ENCODE measurements at regions of chr4 and their contacts with region 1.

Region 1: GRCh38 chr4:139030614-139031235 is 15.1 kb downstream of the NOCT start:
- DNase-seq: peak; percentile 75
- ATAC-seq: peak; percentile 72
- H3K4me3 Mint-ChIP-seq: peak overlapping the region; percentile 28; the same call in 1 of the 2 replicates
- H3K27ac Mint-ChIP-seq: peak overlapping the region; percentile 82
- H3K4me1 Mint-ChIP-seq: peaks cover 50% of the 10 kb centered on the region
- H3K27me3 Mint-ChIP-seq: no peaks in the 10 kb centered on the region
- CTCF ChIP-seq: peak; percentile 62; the same call in 1 of the 2 replicates

Region 2: DNA sequence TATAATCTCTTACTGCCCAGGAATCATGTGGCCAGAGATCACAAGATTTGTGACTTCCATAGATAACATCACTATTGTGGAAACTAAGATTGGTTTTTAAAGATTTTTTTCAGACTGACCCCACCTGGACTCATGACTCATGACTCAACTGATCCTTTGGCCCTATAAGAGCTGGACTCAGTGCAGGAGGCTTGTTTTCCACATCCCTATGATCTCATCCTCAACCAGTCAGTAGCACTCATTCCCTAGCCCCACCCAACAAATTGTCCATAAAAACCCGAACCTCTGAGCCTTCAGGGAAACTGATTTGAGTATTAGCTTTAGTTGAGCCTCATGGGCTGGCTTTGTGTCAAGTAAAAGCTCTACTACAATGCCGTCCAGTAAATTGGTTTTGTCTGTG is 23.1 kb before region 1 on chr4:
- CTCF ChIA-PET with region 1: interaction called, 10 read pairs
- POLR2A ChIA-PET with region 1: no interaction called
- DNase-seq: no peak
- ATAC-seq: no peak
- H3K4me3 Mint-ChIP-seq: no peak overlapping the region
- H3K27ac Mint-ChIP-seq: no peak overlapping the region
- H3K4me1 Mint-ChIP-seq: peaks cover 11% of the 10 kb centered on the region
- H3K27me3 Mint-ChIP-seq: no peaks in the 10 kb centered on the region
- CTCF ChIP-seq: no peak

Region 3: DNA sequence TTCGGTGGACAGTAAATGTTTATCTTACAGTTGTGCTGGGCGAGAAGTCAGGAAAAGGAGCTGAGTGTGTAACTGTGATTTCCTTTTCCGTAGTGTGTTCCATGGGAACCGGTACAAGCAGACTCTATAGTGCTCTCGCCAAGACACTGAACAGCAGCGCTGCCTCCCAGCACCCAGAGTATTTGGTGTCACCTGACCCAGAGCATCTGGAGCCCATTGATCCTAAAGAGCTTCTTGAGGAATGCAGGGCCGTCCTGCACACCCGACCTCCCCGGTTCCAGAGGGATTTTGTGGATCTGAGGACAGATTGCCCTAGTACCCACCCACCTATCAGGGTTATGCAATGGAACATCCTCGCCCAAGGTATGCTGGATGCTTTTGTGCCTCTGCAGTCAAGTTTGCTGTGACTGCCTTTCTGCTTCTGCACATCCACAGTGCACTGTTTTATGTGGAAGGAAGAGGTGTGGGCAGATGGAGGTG is 12.3 kb after region 1 on chr4:
- CTCF ChIA-PET with region 1: interaction called, 31 read pairs
- POLR2A ChIA-PET with region 1: interaction called, 4 read pairs
- DNase-seq: no peak
- ATAC-seq: peak; percentile 35; the same call in 1 of the 2 replicates
- H3K4me3 Mint-ChIP-seq: no peak overlapping the region
- H3K27ac Mint-ChIP-seq: peak overlapping the region; percentile 92
- H3K4me1 Mint-ChIP-seq: peaks cover 22% of the 10 kb centered on the region
- H3K27me3 Mint-ChIP-seq: no peaks in the 10 kb centered on the region
- CTCF ChIP-seq: no peak

Region 4: DNA sequence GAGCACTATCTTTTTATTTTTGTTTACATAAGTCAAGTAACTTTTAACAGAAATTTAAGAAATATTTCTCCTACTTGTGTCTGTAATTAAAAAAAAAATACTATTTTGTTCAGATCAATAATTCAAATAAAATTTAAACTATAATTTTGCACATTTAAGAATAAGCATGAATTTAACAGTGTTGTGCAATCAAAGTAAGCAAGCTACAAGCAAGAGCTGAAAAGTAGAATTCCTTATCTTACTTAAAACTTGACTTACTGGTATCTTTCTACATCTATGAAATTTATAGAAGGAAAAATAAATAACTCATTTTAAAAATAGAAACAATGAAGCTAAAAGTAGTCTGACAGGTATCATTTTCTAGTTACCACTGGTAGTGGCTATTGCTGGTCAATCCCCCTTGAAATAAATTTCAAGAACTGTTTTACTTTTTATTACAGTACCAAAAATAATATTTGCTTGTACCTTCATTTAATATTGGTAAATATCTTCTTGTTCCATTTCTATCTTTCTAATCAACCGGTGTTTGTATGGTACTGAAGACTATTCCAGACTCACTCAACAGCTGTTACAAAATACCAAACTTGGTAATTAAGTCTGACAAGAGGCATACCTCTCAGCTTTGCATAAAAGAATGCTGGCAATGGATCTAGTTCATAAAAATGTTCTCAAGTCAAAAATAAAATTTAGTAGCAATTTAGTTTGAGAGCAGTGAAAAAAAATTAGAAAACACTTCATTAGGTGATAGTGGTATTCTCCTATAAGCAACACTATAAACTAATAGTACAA is 47.0 kb after region 1 on chr4:
- CTCF ChIA-PET with region 1: interaction called, 13 read pairs
- POLR2A ChIA-PET with region 1: no interaction called
- DNase-seq: no peak
- ATAC-seq: no peak
- H3K4me3 Mint-ChIP-seq: no peak overlapping the region
- H3K27ac Mint-ChIP-seq: no peak overlapping the region
- H3K4me1 Mint-ChIP-seq: peaks cover 18% of the 10 kb centered on the region
- H3K27me3 Mint-ChIP-seq: no peaks in the 10 kb centered on the region
- CTCF ChIP-seq: no peak

Region 5: DNA sequence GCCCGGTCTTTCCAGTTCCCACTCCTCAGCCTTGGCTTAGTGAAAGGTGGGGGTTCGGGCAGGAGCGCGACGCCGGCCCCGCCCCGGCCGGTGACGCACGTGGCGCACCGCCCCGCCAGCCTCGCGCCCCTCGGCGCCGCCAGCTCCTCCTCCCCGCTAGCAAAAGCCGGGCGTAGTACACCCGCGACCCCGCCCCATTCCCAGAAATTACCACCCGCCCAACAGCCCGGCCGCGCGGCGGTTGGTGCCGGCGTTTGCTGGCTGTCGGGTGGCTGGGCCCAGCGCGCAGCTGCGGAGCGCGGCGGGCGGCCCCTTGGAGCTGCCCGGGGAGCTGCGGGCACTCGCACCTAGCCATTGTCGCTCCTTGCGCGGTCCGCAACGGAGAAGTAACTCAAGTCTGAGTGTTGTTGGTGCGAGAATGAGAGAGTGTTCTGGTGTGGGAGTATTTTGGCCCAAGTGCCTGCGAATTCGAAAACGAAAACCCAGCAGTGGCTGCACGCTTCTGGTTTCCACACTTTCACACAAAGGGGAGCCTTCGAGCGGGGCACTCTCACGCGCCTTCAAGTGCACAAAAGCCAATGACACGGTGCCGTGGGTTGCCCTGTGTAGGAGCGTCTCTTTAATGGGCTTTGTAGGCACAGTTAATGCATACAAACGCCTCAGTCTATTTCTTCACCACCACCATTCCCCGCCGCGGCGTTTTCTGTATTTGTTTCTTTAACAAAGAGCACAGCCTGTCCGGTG is 147.3 kb after region 1 on chr4:
- CTCF ChIA-PET with region 1: interaction called, 15 read pairs
- POLR2A ChIA-PET with region 1: interaction called, 4 read pairs
- DNase-seq: peak; percentile 96
- ATAC-seq: peak; percentile 72
- H3K4me3 Mint-ChIP-seq: peak overlapping the region; percentile 77
- H3K27ac Mint-ChIP-seq: peak overlapping the region; percentile 98
- H3K4me1 Mint-ChIP-seq: peaks cover 31% of the 10 kb centered on the region
- H3K27me3 Mint-ChIP-seq: peaks cover 19% of the 10 kb centered on the region
- CTCF ChIP-seq: no peak

Region 6: DNA sequence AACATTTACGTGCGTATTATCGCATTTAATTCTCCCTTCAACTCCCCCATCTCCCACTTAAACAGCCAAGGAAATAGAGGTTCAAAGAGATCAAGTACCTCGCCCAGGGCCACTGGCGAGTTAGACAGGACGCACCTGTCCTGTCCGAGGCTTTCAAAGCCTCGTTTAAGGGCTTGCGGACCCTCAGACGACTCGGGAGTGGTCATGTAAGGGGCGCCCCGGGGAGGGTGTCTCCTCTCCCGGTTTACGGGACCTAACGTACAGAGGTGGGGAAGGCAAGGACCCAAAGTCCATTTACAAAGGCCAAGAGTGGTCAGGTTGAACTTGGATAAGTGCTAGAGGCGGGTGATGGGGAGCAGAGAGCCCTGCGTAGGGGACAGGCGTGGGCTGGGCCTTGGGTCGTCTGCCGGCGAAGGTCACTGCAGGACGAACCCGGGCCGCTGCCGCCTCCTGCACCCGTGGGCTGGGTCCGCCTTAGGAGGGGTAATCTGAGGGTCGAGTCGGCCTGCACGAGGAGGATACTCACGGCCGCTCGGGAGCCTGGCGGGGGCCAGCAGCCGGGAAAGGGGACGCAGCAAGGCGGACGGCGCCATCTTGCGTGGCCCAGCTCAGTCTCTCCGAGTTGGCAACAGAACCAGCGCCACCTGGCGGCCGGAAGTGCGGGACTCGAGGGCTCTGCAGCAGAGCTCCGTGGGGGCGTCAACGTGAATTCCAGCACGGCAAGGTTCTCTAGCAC is 264.6 kb after region 1 on chr4:
- CTCF ChIA-PET with region 1: interaction called, 45 read pairs
- POLR2A ChIA-PET with region 1: interaction called, 3 read pairs
- DNase-seq: peak; percentile 97
- ATAC-seq: peak; percentile 93
- H3K4me3 Mint-ChIP-seq: peak overlapping the region; percentile 94
- H3K27ac Mint-ChIP-seq: peak overlapping the region; percentile 82
- H3K4me1 Mint-ChIP-seq: peaks cover 31% of the 10 kb centered on the region; the same call in 1 of the 2 replicates
- H3K27me3 Mint-ChIP-seq: no peaks in the 10 kb centered on the region
- CTCF ChIP-seq: peak; percentile 82

Measured in WTC11 (cell line).